Activated naive CD4-positive, alpha-beta T cell treated with anti-CD3 and anti-CD28 coated beads for 36 hours (primary cell): ENCODE measurements at regions of chr6 and their contacts with region 1.

Region 1: DNA sequence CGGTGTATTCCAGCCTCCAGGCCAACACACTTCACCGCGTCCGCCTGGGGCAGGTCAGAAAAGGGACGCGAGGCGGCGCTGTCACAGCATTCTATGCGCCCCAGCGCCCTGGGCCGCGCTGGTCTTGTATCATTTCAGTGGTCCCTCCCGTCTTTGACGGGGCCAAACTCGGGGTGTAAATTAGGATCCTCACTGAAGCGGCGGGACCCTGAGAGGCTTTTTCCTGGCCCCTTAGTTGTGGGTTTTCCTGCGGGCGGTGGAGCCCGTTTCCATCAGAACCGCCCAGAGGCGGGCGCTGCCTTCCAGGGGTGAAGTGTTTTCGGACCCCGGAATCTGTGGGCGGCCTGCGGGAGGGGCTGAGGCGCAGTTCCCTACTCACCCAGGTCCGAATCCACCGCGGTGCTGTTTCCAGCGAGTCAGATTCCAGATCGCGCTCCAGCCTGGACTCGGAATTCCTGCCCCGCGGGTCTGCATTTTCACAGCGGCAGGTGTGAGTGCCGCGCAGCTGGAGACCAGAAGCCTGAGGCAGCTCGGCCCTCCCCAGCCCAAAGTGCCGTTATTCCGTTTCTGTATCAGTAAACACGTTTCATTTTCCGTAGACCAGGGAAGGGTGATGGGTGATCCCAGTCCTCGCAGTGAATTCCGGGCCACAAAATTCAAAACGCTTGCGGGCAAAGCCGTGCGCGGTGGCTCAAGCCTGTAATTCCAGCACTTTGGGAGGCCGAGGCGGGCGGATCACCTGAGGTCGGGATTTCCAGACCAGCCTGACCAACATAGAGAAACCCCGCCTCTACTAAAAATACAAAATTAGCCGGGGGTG is 3.9 kb upstream of the MICB start:
- DNase-seq: peak; percentile 87
- H3K4me3 Mint-ChIP-seq: peak overlapping the region; percentile 89
- H3K27ac Mint-ChIP-seq: peak overlapping the region; percentile 90
- H3K4me1 Mint-ChIP-seq: peaks cover 43% of the 10 kb centered on the region
- H3K27me3 Mint-ChIP-seq: no peaks in the 10 kb centered on the region

Region 2: GRCh38 chr6:30814136-30815040 is 679.7 kb before region 1 on chr6:
- CTCF ChIA-PET with region 1: no interaction called
- intact Hi-C with region 1: loop called (anchors 10 kb)
- DNase-seq: peak; percentile 81
- H3K4me3 Mint-ChIP-seq: peak overlapping the region; percentile 48
- H3K27ac Mint-ChIP-seq: peak overlapping the region; percentile 95
- H3K4me1 Mint-ChIP-seq: peaks cover 94% of the 10 kb centered on the region
- H3K27me3 Mint-ChIP-seq: no peaks in the 10 kb centered on the region

Region 3: GRCh38 chr6:31462964-31463870 is 30.9 kb before region 1 on chr6:
- CTCF ChIA-PET with region 1: interaction called, 3 read pairs
- intact Hi-C with region 1: loop called (anchors 5 kb)
- DNase-seq: peak; percentile 96
- H3K4me3 Mint-ChIP-seq: peak overlapping the region; percentile 99
- H3K27ac Mint-ChIP-seq: peak overlapping the region; percentile 98
- H3K4me1 Mint-ChIP-seq: peaks cover 58% of the 10 kb centered on the region
- H3K27me3 Mint-ChIP-seq: no peaks in the 10 kb centered on the region

Region 4: DNA sequence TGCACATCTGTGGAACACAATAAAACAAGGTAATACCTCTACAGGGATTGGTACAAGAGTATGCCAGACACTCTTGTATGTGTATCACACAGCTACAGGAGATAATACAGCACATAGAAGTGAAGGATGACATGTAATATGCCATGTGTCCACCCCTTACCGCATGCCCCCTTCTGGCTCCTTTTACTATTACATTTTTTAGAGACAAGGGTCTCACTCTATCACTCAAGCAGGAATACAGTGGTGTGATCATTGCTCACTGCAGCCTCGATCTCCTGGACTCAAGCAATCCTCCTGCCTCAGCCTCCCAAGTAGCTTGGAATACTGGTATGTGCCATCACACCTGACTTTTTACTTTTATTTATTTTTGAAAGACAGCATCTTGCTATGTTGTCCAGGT is 102.9 kb after region 1 on chr6:
- CTCF ChIA-PET with region 1: interaction called, 48 read pairs
- intact Hi-C with region 1: loop called (anchors 1 kb)
- DNase-seq: peak; percentile 56
- H3K4me3 Mint-ChIP-seq: no peak overlapping the region
- H3K27ac Mint-ChIP-seq: peak overlapping the region; percentile 77
- H3K4me1 Mint-ChIP-seq: peaks cover 43% of the 10 kb centered on the region
- H3K27me3 Mint-ChIP-seq: no peaks in the 10 kb centered on the region

Region 5: GRCh38 chr6:31652925-31653718 is 159.0 kb after region 1 on chr6:
- CTCF ChIA-PET with region 1: no interaction called
- intact Hi-C with region 1: loop called (anchors 2 kb)
- DNase-seq: peak; percentile 92
- H3K4me3 Mint-ChIP-seq: peak overlapping the region; percentile 96
- H3K27ac Mint-ChIP-seq: peak overlapping the region; percentile 98
- H3K4me1 Mint-ChIP-seq: peaks cover 44% of the 10 kb centered on the region
- H3K27me3 Mint-ChIP-seq: no peaks in the 10 kb centered on the region

Region 6: DNA sequence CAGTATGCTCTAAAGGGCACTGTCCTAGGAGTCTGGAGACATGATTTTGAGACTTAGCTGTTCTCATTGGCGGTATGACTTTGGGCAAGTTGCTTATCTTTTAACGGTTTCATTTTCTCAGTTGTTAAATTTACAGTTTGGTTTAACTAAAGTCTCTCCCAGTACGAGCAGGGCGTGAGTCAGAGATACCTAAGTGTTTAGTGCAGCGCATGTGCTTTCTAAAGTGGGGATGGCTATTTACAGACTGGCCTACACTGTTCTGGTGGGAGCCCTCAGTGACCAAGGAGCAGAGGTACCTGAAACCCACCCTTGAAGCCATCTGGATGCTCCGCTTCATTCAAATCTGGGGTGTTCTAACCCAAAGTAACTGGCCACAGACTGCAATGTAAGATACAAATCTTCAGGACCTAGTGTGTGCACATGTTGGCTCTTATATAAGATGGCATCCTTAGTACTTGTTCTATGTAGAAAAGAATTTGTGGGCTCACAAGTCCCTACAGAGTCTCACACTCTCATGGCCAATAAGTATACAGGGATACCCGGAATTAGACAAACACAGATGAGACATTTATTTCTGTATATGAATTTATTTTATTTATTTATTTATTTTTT is 256.4 kb after region 1 on chr6:
- CTCF ChIA-PET with region 1: no interaction called
- intact Hi-C with region 1: no loop called
- DNase-seq: no peak
- H3K4me3 Mint-ChIP-seq: no peak overlapping the region
- H3K27ac Mint-ChIP-seq: no peak overlapping the region
- H3K4me1 Mint-ChIP-seq: no peaks in the 10 kb centered on the region
- H3K27me3 Mint-ChIP-seq: no peaks in the 10 kb centered on the region

Region 7: DNA sequence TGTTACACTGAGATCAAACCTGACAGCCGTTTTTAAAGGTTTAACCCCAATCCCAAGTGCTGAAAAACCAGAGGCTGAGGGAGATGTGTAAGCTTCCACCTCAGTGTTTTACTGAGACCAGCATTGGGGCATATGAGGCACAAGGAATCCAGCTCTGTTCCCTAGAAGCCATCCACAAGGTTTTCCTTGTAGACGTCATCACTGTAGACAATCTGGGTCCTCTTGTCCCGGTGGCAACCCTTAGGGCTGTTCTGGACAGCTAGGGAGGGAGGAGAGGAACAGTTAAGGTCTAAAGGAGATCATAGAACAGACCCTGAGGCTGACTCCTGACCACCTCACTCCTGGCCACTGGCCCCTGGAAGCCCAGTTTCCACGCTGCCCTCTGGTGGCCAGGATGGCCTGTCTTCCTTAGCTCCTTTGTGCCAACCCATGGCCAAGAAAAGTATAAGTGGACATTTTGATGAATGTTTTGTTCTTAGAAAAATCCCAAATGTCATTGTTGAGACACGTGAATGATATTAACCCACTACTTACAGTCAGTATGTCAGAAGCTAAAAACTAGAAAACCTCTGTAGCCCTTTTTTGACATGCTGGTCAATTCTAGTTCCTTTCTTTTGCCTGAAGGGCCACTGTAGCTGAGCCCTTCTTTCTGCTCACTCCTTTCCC is 458.2 kb after region 1 on chr6:
- CTCF ChIA-PET with region 1: no interaction called
- intact Hi-C with region 1: no loop called
- DNase-seq: peak; percentile 60
- H3K4me3 Mint-ChIP-seq: no peak overlapping the region
- H3K27ac Mint-ChIP-seq: no peak overlapping the region
- H3K4me1 Mint-ChIP-seq: peaks cover 4% of the 10 kb centered on the region
- H3K27me3 Mint-ChIP-seq: no peaks in the 10 kb centered on the region

Region 8: GRCh38 chr6:32195652-32195901 is 701.5 kb after region 1 on chr6:
- CTCF ChIA-PET with region 1: no interaction called
- intact Hi-C with region 1: loop called (anchors 10 kb)
- DNase-seq: peak; percentile 100
- H3K4me3 Mint-ChIP-seq: peak overlapping the region; percentile 97
- H3K27ac Mint-ChIP-seq: peak overlapping the region; percentile 95
- H3K4me1 Mint-ChIP-seq: peaks cover 36% of the 10 kb centered on the region
- H3K27me3 Mint-ChIP-seq: no peaks in the 10 kb centered on the region